Naive thymus-derived CD4-positive, alpha-beta T cell (primary cell): ENCODE measurements at regions of chr10 and their contacts with region 1.

Region 1: DNA sequence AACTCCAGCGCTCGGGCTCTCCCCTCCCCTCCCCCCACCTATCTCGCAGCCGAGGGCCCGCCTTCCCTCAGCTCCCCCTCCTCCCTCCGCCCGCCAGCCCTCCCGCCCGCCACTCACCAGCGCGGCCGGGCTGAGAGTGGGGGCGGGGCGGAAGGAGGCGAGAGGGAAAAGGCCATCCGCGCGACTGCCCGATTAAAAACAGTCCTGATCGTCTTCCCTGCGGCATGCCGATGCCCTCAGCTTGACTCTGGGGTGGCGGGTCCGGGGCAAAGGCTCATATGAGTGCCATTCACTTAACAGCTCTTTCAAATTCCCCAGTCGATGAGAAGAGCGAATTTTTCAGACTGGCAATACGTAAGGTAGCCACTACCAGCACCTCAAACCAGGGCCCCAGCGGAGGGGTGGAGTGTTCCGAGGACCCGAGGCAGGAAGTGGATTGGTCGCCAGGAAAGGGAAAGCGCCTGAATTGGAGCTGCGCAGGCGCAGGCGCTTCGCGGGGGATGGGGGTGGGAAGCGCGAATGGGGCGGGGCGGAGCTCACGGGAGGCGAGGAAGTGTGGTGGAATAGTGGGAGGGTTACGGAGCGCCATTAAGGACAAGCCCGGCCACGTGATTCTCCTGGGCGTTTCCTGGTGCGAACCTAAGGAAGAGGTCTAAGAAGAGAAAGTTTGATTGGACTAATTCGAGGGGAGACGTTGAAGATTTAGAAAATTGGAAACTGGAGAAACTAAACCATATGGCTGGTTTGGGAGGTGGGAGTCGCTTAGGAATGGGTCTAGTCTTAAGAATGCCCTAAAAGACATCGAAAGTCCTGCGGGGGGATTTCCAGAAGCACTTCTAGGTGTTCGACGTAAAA is at the start of gene UPF2:
- DNase-seq: peak; percentile 95 to 98 (median 97)
- ATAC-seq: peak; percentile 93
- H3K4me3 ChIP-seq: peak within 1 kb of the TSS; percentile 83
- H3K4me3 Mint-ChIP-seq: peak within 1 kb of the TSS; percentile 87 to 100 (median 95)
- H3K27ac ChIP-seq: peak within 1 kb of the TSS; percentile 92
- H3K27ac Mint-ChIP-seq: peak within 1 kb of the TSS; percentile 98 to 100 (median 99)
- H3K4me1 ChIP-seq: peaks cover 10 to 16% of the 10 kb centered on the region in 2 donors
- H3K4me1 Mint-ChIP-seq: peaks cover 13 to 47% (median 40%) of the 10 kb centered on the region in 7 donors
- H3K27me3 ChIP-seq: no peaks in the 10 kb centered on the region
- H3K27me3 Mint-ChIP-seq: peaks cover 0 to 3% (median 0%) of the 10 kb centered on the region in 5 donors
- total RNA-seq, gene UPF2: 27.2 to 40.5 (median 36.3) TPM

Region 2: DNA sequence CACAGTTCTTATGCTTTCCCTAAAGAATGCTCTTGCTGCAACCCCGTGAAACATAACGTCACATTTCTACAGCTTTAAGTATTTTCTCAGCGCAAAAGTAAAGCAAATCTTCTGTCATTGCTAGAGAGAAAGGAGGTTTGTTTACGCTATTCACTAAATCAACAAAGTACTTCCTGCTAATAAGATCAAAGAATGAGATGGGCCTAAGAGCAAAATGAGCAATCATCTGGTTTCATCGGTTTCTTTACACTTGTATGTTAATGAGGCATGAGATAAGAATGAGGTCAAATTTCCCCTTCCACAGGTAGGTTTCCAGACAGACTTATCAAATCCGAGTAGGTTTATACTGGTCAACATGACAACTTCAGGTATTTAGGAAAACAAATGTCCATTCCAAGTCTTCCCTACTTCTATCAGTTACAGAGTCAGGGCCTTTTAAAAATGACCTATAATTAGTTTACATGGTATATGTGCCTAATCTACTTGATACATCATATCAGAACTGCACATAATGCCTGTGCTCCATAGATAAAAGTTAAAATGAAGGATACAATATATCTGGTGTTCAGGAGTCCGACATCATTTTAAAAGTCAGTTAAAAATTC is 440.0 kb before region 1 on chr10:
- CTCF ChIA-PET with region 1: no interaction called
- POLR2A ChIA-PET with region 1: no interaction called
- intact Hi-C with region 1: loop called in 1 of 2 experiments (anchors 10 kb)
- DNase-seq: no peak
- ATAC-seq: no peak
- H3K4me3 ChIP-seq: no peak overlapping the region
- H3K4me3 Mint-ChIP-seq: peak overlapping the region in 2 of 10 donors; percentile 15 to 73
- H3K27ac ChIP-seq: no peak overlapping the region
- H3K27ac Mint-ChIP-seq: peak overlapping the region in 3 of 9 donors; percentile 69 to 93 (median 72)
- H3K4me1 ChIP-seq: peaks cover 0 to 13% of the 10 kb centered on the region in 2 donors
- H3K4me1 Mint-ChIP-seq: peaks cover 14 to 57% (median 37%) of the 10 kb centered on the region in 7 donors
- H3K27me3 ChIP-seq: no peaks in the 10 kb centered on the region
- H3K27me3 Mint-ChIP-seq: peaks cover 0 to 7% (median 0%) of the 10 kb centered on the region in 5 donors

Region 3: DNA sequence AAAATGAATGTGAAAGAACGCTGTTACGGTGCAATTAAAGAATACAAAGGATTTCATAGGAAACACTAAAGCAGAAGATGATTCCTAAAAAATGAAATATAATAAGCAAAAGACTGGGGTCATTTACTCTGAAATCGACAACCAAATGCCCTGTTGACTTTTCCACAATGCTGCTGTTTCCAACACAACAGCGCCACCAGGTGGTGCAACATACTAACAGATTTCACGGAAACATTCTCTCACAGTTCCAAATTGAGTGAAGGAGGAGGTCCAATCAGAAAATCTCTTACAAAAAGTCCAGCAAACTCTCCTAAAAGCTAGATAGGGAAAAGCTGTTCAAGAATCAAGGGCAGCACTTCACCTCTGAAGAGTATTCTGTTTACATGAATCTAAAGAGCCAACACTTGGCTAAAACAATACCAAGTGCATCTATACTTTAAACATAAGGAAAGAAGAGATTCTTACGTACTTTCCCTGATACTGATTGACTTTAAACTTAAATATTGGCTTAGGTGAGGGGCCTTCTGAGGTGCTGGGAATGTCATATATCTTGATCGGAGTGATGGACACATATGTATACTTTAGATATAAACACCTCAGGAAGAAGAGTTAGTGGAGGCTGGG is 56.3 kb before region 1 on chr10:
- CTCF ChIA-PET with region 1: interaction called, 6 read pairs
- POLR2A ChIA-PET with region 1: no interaction called
- intact Hi-C with region 1: loop called in 1 of 2 experiments (anchors 2 kb)
- DNase-seq: peak; percentile 31 to 68 (median 57)
- ATAC-seq: peak; percentile 76
- H3K4me3 ChIP-seq: no peak overlapping the region
- H3K4me3 Mint-ChIP-seq: no peak overlapping the region
- H3K27ac ChIP-seq: no peak overlapping the region
- H3K27ac Mint-ChIP-seq: peak overlapping the region in 4 of 9 donors; percentile 13 to 77 (median 43)
- H3K4me1 ChIP-seq: no peaks in the 10 kb centered on the region
- H3K4me1 Mint-ChIP-seq: peaks cover 6 to 10% (median 8%) of the 10 kb centered on the region in 7 donors
- H3K27me3 ChIP-seq: no peaks in the 10 kb centered on the region
- H3K27me3 Mint-ChIP-seq: no peaks in the 10 kb centered on the region

Region 4: GRCh38 chr10:12027539-12027938 is 15.5 kb before region 1 on chr10:
- CTCF ChIA-PET with region 1: interaction called, 3 read pairs
- POLR2A ChIA-PET with region 1: interaction called, 4 read pairs
- intact Hi-C with region 1: loop called in 1 of 2 experiments (anchors 2 kb)
- DNase-seq: no peak
- ATAC-seq: no peak
- H3K4me3 ChIP-seq: no peak overlapping the region
- H3K4me3 Mint-ChIP-seq: peak overlapping the region in 2 of 10 donors; percentile 1 to 9
- H3K27ac ChIP-seq: no peak overlapping the region
- H3K27ac Mint-ChIP-seq: peak overlapping the region in 1 of 9 donors; percentile 3
- H3K4me1 ChIP-seq: peaks cover 0 to 7% of the 10 kb centered on the region in 2 donors
- H3K4me1 Mint-ChIP-seq: peaks cover 17 to 63% (median 57%) of the 10 kb centered on the region in 7 donors
- H3K27me3 ChIP-seq: no peaks in the 10 kb centered on the region
- H3K27me3 Mint-ChIP-seq: no peaks in the 10 kb centered on the region

Region 5: DNA sequence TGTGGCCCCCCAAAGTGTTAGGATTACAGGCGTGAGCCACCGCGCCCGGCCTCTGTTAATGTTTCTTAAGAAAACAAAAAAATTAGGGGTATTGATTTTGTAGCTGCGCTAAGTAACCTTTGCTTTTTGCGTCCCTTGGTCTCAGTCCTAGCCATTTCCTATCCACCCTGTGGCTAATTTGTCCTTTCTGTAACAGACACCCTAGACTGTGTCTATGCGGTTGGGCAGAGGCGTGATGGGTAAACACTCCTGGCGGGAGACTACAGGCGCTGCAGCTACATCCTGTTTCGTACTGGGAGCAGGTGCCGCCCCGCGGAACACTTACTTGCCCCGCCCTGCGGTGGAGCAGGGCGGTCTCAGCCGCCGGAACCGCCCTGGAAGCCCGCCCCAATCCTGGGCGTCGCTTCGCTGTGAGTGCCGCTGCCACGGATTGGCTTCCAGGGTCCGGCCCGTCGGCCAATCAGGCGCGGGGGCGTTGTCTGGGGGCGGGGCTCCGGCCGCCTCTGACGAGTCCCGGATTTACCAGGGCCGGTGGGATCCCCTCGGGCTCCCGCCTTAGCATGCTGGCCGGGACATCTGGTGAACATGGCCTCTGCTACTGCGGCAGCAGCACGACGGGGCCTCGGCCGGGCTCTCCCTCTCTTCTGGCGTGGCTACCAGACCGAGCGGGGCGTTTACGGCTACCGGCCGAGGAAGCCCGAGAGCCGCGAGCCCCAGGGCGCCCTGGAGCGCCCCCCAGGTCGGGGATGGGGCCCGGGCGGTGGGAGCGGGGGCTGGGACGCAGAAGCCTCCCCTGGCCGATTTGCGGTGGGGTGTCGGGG is 25.6 kb after region 1 on chr10 and contains the start of gene DHTKD1:
- CTCF ChIA-PET with region 1: interaction called, 3 read pairs
- POLR2A ChIA-PET with region 1: interaction called, 16 read pairs
- intact Hi-C with region 1: loop called (anchors 1 kb)
- DNase-seq: peak; percentile 96 to 100 (median 98)
- ATAC-seq: peak; percentile 99
- H3K4me3 ChIP-seq: peak within 1 kb of the TSS; percentile 85
- H3K4me3 Mint-ChIP-seq: peak within 1 kb of the TSS; percentile 84 to 92 (median 88)
- H3K27ac ChIP-seq: peak within 1 kb of the TSS; percentile 85
- H3K27ac Mint-ChIP-seq: peak within 1 kb of the TSS; percentile 85 to 99 (median 95)
- H3K4me1 ChIP-seq: peaks cover 6 to 15% of the 10 kb centered on the region in 2 donors
- H3K4me1 Mint-ChIP-seq: peaks cover 12 to 27% (median 20%) of the 10 kb centered on the region in 7 donors
- H3K27me3 ChIP-seq: no peaks in the 10 kb centered on the region
- H3K27me3 Mint-ChIP-seq: no peaks in the 10 kb centered on the region
- total RNA-seq, gene DHTKD1: 10.8 to 25.9 (median 12.5) TPM